A673 (cell line): ENCODE measurements at regions of chr5 and their contacts with region 1.

Region 1: GRCh38 chr5:135505973-135506372 is 29.8 kb downstream of the NEUROG1 start:
- DNase-seq: no peak
- H3K4me3 ChIP-seq: no peak overlapping the region
- H3K27ac ChIP-seq: no peak overlapping the region
- H3K4me1 ChIP-seq: no peaks in the 10 kb centered on the region
- H3K27me3 ChIP-seq: peaks cover 31% of the 10 kb centered on the region
- CTCF ChIP-seq: no peak

Region 2: DNA sequence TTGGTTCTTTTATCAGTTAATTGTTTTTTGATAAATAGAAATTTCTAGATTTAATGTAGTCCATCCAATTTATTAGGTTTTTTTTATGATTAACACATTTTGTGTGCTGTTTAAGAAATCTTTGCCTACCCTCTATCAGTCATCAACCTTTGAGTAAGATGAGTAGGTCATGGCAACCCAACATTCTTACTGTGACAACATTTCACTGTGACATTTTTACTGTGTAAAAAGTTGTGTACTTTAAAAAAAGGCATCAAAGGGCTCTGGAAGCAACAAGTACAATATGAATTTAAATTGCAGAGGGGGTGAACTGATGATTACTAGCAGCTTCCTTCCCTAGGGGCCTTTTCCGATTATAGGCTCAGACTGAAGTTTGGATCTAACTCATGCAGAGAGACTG is 95.6 kb before region 1 on chr5:
- CTCF ChIA-PET with region 1: no interaction called
- POLR2A ChIA-PET with region 1: no interaction called
- intact Hi-C with region 1: no loop called
- DNase-seq: no peak
- H3K4me3 ChIP-seq: no peak overlapping the region
- H3K27ac ChIP-seq: no peak overlapping the region
- H3K4me1 ChIP-seq: no peaks in the 10 kb centered on the region
- H3K27me3 ChIP-seq: peaks cover 75% of the 10 kb centered on the region
- CTCF ChIP-seq: no peak

Region 3: GRCh38 chr5:135482381-135482933 is 23.5 kb before region 1 on chr5:
- CTCF ChIA-PET with region 1: no interaction called
- POLR2A ChIA-PET with region 1: interaction called, 14 read pairs
- intact Hi-C with region 1: no loop called
- DNase-seq: no peak
- H3K4me3 ChIP-seq: no peak overlapping the region
- H3K27ac ChIP-seq: no peak overlapping the region
- H3K4me1 ChIP-seq: no peaks in the 10 kb centered on the region
- H3K27me3 ChIP-seq: peaks cover 18% of the 10 kb centered on the region
- CTCF ChIP-seq: no peak

Region 4: DNA sequence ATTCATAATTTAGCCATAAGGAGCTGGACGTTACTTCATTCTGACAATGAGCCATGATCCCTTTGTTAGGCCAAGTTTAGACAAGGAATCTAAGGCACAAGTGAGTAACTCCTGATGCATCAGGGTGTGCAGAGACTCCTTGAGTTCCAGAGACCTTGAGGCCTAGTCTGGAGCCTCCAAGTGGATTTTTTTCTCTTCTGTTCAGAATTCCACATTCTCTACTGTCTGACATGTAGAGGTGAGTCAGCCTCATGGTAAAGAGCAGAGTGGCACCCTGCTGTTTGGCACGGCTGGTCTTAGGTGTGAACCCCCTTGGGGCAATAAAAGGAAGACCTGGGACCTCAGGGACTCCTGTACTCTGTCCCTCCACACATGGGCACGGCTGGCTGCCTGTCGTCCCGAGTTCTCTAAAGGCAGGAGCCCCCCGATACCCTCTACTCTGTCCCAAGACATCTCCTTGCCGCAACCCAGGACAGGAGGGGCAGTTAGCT is 500.8 kb after region 1 on chr5:
- CTCF ChIA-PET with region 1: no interaction called
- POLR2A ChIA-PET with region 1: no interaction called
- intact Hi-C with region 1: no loop called
- DNase-seq: no peak
- H3K4me3 ChIP-seq: no peak overlapping the region
- H3K27ac ChIP-seq: no peak overlapping the region
- H3K4me1 ChIP-seq: peaks cover 39% of the 10 kb centered on the region
- H3K27me3 ChIP-seq: no peaks in the 10 kb centered on the region
- CTCF ChIP-seq: no peak